Posterior cingulate gyrus (tissue), 11 donors: ENCODE measurements at regions of chr5 and their contacts with region 1.

Region 1: DNA sequence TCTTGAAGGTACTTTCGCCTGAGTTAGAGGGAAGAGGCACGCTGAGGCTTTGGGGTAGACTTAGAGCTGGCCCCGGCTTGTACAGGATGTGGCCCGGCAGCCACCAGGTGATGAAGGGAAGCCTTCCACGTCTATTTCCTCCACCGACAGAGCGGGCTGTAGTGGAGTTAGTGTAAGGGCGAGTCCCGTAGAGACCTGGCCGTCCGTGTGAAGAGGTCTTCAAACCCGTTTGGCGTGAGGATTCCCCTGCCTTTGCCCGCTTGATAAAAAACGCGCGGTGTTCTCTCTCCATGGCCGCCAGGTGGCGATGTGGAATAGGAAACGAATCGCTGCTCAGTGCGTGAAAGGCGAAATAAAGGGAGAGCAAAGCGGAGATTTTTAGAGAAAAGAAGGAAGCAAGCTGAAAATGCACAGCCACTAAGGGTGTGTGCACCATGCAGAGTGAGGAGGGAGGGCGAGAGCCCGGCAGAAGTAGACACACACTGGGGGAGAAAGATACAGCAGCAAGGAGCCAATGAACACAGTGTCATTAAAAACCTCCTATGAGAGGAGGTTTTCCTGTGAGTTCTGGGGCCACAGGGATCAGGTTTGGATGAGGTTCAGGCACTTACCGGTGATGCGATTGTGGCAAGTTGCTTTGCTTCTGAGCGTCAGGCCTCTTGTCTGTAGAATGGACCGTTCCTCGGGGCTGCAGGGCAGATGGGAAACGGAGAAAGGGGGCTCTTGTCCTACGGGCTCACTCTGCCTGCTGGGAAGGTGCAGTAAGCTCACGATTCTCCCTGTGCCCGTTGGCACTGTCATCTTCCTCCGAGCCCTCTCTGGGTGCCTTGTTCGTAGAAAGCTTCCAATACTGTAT is 34.2 kb downstream of the STC2 start:
- DNase-seq: peak; percentile 60 to 96 (median 84)

Region 2: DNA sequence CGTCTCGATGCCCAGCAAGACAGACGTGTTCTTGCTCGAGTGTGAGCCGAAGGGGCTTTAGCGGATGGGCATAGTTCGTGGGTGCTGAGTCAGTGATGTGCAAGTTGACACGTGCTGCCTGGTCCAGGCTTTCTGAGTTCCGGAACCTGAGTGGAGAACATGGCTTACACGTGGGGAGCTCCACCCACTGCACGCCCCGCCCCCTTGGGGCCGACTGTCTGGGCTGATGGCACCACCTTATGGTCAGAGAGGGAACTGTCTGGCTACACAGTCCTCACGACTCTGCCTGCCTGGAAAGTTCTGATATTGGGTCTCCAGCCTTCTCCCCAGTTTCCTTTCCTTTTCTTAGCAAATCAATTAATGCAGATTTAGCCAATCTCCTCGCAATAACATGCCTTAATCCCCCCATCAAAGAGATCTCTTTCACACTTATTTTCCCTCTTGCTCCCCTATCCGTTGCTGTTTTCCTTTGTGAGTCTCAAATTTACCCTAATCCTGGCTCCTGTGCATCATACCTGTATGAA is 38.0 kb after region 1 on chr5:
- intact Hi-C with region 1: loop called (anchors 1 kb)
- DNase-seq: peak; percentile 36 to 96 (median 76)

Region 3: GRCh38 chr5:173498286-173498685 is 204.2 kb after region 1 on chr5:
- intact Hi-C with region 1: loop called (anchors 5 kb)
- DNase-seq: no peak

Region 4: DNA sequence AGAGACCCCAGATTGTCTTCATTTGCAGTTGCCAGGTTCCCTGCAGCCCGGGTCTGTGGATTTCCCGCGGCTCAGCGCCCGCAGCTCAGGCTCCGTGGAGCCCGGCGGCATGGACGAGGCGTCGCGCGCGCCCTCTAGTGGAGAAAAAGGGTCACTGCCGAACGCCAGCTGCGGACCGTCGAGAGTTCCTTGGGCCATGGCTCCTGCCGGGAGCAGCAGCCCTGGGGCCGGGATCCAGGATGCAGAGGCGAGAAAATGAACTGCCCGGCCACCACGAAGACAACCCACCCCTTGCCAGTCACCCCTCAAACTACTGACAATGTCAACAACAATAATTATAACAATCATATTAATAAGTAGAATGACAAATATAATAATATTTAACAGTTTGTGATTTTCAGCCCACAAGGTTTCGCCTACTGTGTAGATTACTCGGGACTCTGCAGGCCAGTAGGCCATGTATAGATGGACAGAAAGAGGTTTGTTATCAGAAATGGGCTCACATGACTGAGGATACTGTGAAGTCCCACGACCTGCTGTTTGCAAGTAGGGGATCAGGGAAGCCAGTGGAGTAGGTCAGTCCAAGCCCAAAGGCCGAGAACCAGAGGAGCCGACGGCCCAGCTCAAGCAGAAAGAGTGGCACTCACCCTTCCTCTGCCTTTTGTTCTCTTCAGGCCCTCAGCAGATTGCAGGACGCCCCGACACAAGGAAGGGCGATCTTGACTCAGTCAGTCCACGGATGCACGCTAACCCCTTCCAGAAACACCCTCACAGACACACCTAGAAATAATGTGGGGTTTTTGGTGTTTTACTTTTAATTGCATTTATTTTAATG is 279.3 kb after region 1 on chr5:
- intact Hi-C with region 1: loop called (anchors 2 kb)
- DNase-seq: peak; percentile 61 to 97 (median 86)

Region 5: DNA sequence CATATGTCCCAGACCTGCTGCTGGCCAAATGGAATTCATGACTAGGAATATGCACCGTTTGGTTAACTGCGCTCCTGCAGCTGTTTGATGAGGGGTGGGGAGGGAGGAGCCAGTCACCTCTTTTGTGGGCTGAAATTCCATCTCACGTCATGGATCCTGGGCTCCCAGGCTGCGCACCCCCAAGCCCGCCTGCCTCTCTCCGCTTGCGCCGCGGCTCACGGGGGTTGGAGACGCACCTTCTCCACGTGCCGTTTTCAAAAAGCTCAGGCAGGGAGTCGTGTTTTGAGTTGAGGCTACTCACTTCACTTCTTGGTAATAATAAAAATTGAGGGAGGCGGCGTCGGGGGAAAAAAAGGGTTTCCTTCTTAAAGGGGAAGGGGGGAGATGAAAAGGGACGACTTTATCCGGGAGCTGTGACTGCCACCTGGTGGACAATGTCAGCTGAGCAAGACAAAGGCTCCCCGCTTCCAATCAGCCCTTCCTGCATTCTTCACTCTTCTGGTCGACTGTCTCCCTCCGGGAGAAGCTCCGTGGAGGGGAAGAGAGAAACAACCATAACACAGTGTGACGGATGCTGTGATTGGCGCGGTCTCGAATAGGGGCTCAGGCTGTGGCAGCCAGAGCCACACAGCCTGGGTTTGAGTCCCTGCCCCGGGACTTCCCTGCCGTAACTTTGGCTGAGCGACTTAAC is 679.0 kb after region 1 on chr5:
- intact Hi-C with region 1: loop called (anchors 10 kb)
- DNase-seq: peak; percentile 75 to 97 (median 89)

Region 6: GRCh38 chr5:174317259-174317894 is 1023.3 kb after region 1 on chr5:
- intact Hi-C with region 1: loop called (anchors 5 kb)
- DNase-seq: peak; percentile 46 to 96 (median 69)